ENCODE measurements at regions of chr12 and their contacts with region 1.

Region 1: GRCh38 chr12:3073438-3074250 is 3.5 kb upstream of the TSPAN9 start:
- DNase-seq: peak; percentile 92
- ATAC-seq: peak; percentile 48
- H3K4me3 Mint-ChIP-seq: no peak overlapping the region
- H3K27ac Mint-ChIP-seq: no peak overlapping the region
- H3K4me1 Mint-ChIP-seq: peaks cover 8% of the 10 kb centered on the region
- H3K27me3 Mint-ChIP-seq: peaks cover 19% of the 10 kb centered on the region
- CTCF ChIP-seq: peak; percentile 90

Region 2: GRCh38 chr12:2719392-2719791 is 354.3 kb before region 1 on chr12:
- CTCF ChIA-PET with region 1: no interaction called
- POLR2A ChIA-PET with region 1: no interaction called
- DNase-seq: no peak
- ATAC-seq: no peak
- H3K4me3 Mint-ChIP-seq: no peak overlapping the region
- H3K27ac Mint-ChIP-seq: no peak overlapping the region
- H3K4me1 Mint-ChIP-seq: no peaks in the 10 kb centered on the region
- H3K27me3 Mint-ChIP-seq: peaks cover 33% of the 10 kb centered on the region
- CTCF ChIP-seq: no peak

Region 3: GRCh38 chr12:3084742-3085141 is 11.1 kb after region 1 on chr12:
- CTCF ChIA-PET with region 1: interaction called, 11 read pairs
- POLR2A ChIA-PET with region 1: no interaction called
- DNase-seq: peak; percentile 73
- ATAC-seq: peak; percentile 89
- H3K4me3 Mint-ChIP-seq: no peak overlapping the region; the same call in 1 of the 2 replicates
- H3K27ac Mint-ChIP-seq: peak overlapping the region; percentile 82
- H3K4me1 Mint-ChIP-seq: peaks cover 38% of the 10 kb centered on the region
- H3K27me3 Mint-ChIP-seq: no peaks in the 10 kb centered on the region
- CTCF ChIP-seq: no peak

Region 4: DNA sequence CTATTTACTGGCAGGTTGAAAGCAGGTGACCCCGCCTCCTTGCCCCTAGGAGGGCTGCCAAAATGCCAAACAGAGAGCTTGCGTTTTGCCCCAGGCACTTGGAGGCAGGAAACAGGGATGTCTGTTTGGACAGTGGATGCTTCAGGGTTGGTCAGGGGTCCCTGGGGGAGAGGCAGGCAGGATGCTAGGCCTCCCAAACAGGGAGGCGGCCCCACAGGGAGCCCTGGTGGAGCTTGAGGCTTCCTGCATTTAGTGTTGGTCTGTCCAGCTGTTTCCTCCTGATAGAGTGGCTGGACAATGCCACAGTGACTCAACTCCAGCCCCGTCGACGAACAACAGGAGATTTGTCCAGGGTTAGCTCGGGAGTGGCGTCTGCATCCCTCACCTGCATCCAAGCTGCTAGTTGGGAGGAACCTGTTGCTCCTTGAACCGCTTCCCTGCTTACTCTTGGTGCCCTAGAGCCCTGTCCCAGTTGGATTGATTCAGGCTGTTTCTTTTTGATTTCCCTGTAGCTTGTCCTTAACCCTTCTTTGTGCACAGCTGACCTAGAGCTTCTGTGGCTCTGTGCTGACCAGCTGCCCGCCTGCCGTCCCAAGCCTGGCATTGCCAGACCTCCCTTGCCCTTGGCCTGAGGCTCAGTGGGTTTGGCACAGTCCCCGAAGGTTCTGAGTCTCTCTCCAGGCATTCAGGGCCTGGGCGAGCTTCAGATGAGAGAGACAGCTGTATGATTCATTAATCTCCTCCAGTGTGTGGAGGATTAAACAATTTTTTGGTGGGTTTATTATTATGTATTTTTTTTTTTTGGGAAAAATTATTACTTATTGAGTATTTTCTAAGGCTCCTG is 49.4 kb after region 1 on chr12:
- CTCF ChIA-PET with region 1: interaction called, 12 read pairs
- POLR2A ChIA-PET with region 1: interaction called, 7 read pairs
- DNase-seq: peak; percentile 13
- ATAC-seq: peak; percentile 56
- H3K4me3 Mint-ChIP-seq: no peak overlapping the region
- H3K27ac Mint-ChIP-seq: no peak overlapping the region; the same call in 1 of the 2 replicates
- H3K4me1 Mint-ChIP-seq: peaks cover 5% of the 10 kb centered on the region
- H3K27me3 Mint-ChIP-seq: no peaks in the 10 kb centered on the region; the same call in 1 of the 2 replicates
- CTCF ChIP-seq: no peak

Region 5: DNA sequence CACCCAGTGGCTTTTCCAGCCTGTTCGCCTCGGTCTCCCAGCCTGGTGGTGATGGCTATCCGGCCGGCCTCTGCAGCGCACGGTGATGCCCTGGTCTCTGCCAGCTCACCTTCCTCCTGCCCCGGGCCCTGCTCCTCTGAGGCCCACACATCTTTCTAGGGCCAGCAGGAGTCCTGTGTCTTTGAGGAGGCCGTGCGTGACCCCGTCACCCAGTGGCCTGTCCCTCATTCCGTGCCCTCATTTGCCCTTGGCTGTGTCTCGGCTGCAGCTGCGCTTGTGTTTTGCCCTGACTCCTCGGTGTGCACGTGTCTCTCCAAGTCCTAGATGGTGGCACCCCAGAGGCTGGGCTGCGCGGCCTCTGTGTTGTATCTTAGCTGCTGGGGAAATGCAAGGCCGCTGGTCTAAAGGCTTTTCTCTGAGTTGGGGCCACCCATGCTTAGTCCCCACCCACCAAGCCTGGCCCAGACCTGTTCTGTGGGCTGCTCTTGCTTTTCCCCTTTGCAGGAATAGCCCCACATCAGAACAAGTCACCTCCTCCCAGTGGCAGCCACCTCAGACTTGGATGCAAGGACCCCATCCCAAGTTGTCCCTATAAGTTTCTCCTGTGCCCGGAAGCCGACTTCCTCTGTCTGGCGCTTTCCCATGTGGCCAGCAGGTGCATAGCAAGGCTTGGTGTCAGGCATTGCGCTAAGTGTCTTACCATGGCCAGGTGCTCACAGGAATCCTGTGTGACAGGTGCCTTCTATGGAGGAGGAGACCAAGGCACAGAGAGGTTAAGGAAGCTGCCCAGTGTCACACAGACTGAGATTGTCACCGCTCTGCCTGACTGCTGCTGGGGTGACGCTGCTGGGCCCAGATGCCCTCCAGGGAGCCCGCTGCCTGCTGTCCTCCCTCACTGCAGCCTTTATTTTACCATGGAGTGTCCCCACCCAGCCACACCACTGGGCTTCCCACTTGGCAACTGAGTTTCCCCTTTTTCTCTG is 68.0 kb after region 1 on chr12:
- CTCF ChIA-PET with region 1: interaction called, 10 read pairs
- POLR2A ChIA-PET with region 1: no interaction called
- DNase-seq: no peak
- ATAC-seq: peak; percentile 55
- H3K4me3 Mint-ChIP-seq: no peak overlapping the region
- H3K27ac Mint-ChIP-seq: peak overlapping the region; percentile 54
- H3K4me1 Mint-ChIP-seq: peaks cover 37% of the 10 kb centered on the region
- H3K27me3 Mint-ChIP-seq: no peaks in the 10 kb centered on the region
- CTCF ChIP-seq: no peak

Measured in WTC11 (cell line).